ENCODE measurements at regions of chr12 and their contacts with region 1.

Region 1: DNA sequence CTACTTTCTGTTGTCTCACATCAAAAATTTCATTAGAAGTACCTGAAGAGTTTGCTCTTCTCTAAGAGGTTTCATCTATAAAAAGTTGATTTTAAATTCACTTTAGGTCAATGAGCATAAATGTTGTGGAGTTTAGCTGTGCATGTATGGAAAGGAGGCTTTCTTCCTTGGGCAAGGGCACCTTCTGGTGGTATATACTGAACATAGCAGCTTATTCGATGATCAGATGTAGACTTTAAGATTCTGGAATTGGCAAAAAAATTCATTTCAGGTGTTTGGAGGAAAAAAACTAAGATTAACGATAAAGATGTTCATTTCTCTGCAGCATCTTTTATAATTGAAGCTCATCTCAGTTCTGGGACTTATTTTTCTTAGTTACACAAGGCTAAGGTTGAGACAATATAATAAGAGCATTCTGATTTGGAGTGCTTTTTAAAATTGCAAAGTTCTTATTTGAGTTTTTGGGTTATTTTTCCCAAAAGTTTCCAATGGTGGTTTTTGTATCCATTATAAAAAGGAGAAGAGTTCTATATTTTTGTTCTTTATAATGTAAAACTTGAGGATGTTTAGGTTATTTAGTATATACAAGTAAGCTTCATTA is 46.8 kb downstream of the TMEM117 start:
- DNase-seq: peak; percentile 65
- H3K4me3 Mint-ChIP-seq: no peak overlapping the region
- H3K27ac Mint-ChIP-seq: no peak overlapping the region
- H3K4me1 Mint-ChIP-seq: no peaks in the 10 kb centered on the region
- H3K27me3 Mint-ChIP-seq: no peaks in the 10 kb centered on the region
- CTCF ChIP-seq: peak; percentile 71

Region 2: GRCh38 chr12:43444940-43445564 is 437.6 kb before region 1 on chr12:
- CTCF ChIA-PET with region 1: interaction called, 8 read pairs
- POLR2A ChIA-PET with region 1: no interaction called
- intact Hi-C with region 1: loop called (anchors 1 kb)
- DNase-seq: peak; percentile 74
- H3K4me3 Mint-ChIP-seq: no peak overlapping the region
- H3K27ac Mint-ChIP-seq: no peak overlapping the region
- H3K4me1 Mint-ChIP-seq: no peaks in the 10 kb centered on the region
- H3K27me3 Mint-ChIP-seq: peaks cover 40% of the 10 kb centered on the region
- CTCF ChIP-seq: peak; percentile 70

Region 3: DNA sequence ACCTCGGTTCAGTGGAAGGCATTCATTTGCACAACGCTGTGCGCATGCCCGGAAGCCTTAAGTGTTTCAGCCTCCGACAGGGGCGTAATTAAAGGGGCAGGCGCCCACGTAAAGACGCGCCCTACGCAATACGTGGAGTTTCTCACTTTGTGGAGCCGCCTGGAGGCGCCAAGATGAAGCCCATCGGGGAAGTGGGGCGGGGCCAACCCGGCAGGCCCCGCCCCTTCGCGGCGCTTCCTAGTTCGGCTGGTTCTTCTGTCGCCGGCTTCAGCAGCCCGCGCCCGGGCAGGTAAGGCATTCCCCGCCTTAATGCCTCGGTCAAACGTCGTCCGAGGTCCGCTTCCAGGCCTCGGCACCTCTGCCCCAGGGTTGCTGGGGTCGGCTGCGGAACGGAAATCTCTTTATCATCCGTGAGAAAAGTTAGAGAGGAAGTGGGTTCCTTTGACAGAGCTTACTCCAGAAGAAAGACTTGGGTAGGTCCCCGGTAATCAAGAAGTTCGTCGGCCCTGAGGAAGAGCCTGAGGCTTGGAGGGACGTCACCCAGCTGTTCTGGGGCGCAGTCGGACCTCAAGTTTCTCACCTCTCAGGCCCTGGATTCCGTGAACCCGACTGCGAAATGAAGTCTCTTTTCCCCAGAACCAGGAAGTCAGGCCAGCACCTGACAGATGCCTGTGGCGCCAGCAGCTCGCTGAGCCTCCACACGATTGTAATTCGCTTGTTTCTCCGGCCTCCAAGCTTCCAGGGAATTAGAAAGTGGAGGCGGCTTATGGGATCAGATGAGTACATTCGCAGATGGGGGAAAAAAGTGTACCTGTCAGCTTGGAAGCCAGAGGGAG is 123.7 kb before region 1 on chr12 and contains the starts of genes IRAK4 and PUS7L:
- CTCF ChIA-PET with region 1: interaction called, 62 read pairs
- POLR2A ChIA-PET with region 1: interaction called, 25 read pairs
- intact Hi-C with region 1: loop called (anchors 1 kb)
- DNase-seq: peak; percentile 98
- H3K4me3 Mint-ChIP-seq: peak within 1 kb of the TSS; percentile 87
- H3K27ac Mint-ChIP-seq: peak within 1 kb of the TSS; percentile 84
- H3K4me1 Mint-ChIP-seq: peaks cover 30% of the 10 kb centered on the region
- H3K27me3 Mint-ChIP-seq: no peaks in the 10 kb centered on the region
- CTCF ChIP-seq: peak; percentile 27
- total RNA-seq, gene IRAK4: 10.1 and 12.2 TPM in 2 replicates
- total RNA-seq, gene PUS7L: 15.9 and 26.5 TPM in 2 replicates

Region 4: DNA sequence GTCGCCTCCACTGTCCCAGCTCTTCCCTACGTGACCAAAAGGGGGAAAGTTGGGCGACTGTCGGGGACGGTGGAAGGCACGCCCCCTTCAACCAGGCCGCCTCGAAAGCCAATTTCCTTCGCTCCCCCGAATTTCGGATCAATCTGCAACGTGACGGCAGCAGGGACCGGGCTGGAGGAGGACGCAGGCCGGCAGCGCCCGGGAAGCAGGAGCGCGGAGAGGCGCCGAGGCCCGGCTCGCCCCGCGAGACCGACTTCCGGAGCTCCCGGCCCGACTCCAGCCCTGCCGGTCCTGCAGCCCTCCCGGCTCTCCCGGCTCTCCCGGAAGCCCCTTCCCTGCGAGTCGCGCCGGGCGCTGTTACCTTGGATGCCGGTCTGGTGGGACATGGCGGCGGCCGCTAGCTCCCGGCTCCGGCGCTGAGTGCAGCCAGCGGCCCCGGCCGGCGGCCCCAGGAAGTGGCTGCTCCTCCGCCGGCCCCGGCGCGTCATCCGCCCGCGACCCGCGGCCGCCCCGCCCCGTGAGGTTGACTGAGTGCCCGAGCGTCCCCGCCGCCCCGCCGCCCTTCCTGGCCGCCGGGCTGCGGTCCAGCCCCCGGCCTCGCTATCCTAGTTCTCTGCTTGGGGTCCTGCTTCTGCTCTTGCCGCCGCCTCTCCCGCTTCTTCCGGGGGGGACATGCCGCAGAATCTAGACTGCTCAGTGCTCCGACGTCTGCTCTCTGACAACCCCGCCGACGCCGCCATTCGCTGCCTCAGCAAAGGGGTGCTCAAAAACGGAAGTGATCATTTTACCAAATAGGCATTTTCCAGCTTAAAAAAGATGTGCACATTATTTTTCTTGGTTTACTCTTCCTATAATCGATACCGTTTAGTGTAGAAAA is 76.6 kb before region 1 on chr12 and contains the start of gene TWF1:
- CTCF ChIA-PET with region 1: interaction called, 45 read pairs
- POLR2A ChIA-PET with region 1: interaction called, 34 read pairs
- intact Hi-C with region 1: loop called (anchors 1 kb)
- DNase-seq: peak; percentile 75
- H3K4me3 Mint-ChIP-seq: peak within 1 kb of the TSS; percentile 86
- H3K27ac Mint-ChIP-seq: peak within 1 kb of the TSS; percentile 98
- H3K4me1 Mint-ChIP-seq: peaks cover 7% of the 10 kb centered on the region
- H3K27me3 Mint-ChIP-seq: no peaks in the 10 kb centered on the region
- CTCF ChIP-seq: peak; percentile 28
- total RNA-seq, gene TWF1: 104 and 105 TPM in 2 replicates

Region 5: DNA sequence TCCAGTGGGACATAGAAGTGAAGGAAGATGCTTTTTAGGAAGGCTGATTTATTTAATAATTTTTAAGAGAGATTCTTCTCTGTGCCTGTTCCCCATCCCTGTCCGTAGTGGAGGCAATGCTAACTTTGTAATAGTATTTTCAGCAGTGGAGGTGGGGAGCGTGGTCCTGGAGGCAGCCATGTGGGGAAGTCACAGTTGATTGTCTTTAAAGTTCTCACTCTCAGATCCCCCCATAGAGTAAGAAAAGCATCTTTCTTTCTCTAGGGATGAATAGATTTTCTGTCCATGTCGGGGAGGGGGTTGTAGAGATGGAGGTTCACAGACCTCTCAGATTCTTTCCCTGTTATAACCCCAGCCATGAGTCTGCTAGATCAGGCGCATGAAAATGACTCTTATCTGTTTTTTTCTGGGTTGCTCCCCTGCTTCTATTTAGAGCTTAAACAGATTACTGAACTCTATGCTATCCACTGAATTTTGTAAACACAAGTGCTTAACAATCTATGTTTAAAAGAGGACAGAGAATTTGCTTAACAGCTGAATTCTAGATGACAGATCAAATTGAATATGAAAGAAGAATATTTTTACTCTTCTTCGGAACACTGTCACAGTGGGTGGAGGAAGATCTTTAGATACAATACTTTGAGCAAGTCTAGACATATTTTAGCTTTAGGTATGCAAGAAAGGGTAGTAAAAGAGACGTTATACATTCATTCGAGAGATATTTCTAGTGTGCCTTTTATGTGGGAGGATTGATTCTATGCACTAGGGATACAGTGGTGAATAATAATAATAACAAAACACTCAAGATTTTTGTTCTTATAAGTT is 21.5 kb before region 1 on chr12:
- CTCF ChIA-PET with region 1: interaction called, 16 read pairs
- POLR2A ChIA-PET with region 1: no interaction called
- intact Hi-C with region 1: no loop called
- DNase-seq: no peak
- H3K4me3 Mint-ChIP-seq: no peak overlapping the region
- H3K27ac Mint-ChIP-seq: peak overlapping the region; percentile 78
- H3K4me1 Mint-ChIP-seq: peaks cover 11% of the 10 kb centered on the region
- H3K27me3 Mint-ChIP-seq: no peaks in the 10 kb centered on the region
- CTCF ChIP-seq: no peak

Region 6: DNA sequence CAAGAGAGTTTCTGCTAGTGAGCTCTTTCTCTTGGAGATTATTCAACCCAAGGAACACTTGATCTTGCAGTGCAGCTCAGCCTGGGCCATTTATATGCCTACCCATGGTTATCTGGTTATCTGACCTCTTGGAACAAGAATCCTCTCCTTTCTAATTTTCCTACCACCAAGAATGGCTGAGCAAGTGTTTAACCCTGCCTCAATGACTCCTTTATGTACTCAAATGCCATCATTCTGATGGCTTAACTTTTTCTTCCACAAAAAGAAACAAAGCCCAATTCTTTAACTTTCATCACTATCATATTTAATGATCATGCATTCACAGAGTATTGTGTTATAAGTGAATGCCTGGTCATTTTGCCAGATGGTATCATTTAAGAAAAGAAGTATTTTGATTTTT is 21.0 kb after region 1 on chr12:
- CTCF ChIA-PET with region 1: interaction called, 12 read pairs
- POLR2A ChIA-PET with region 1: no interaction called
- intact Hi-C with region 1: no loop called
- DNase-seq: no peak
- H3K4me3 Mint-ChIP-seq: no peak overlapping the region
- H3K27ac Mint-ChIP-seq: no peak overlapping the region
- H3K4me1 Mint-ChIP-seq: no peaks in the 10 kb centered on the region
- H3K27me3 Mint-ChIP-seq: no peaks in the 10 kb centered on the region
- CTCF ChIP-seq: no peak